ENCODE measurements at regions of chr18 and their contacts with region 1.

Region 1: GRCh38 chr18:12883684-12884405 is at the start of gene PTPN2:
- DNase-seq: peak; percentile 93
- ATAC-seq: peak; percentile 88
- H3K4me3 Mint-ChIP-seq: peak within 1 kb of the TSS; percentile 78
- H3K27ac Mint-ChIP-seq: peak within 1 kb of the TSS; percentile 94
- H3K4me1 Mint-ChIP-seq: peaks cover 56% of the 10 kb centered on the region
- H3K27me3 Mint-ChIP-seq: no peaks in the 10 kb centered on the region
- total RNA-seq, gene PTPN2: 60.6 to 72.9 TPM

Region 2: DNA sequence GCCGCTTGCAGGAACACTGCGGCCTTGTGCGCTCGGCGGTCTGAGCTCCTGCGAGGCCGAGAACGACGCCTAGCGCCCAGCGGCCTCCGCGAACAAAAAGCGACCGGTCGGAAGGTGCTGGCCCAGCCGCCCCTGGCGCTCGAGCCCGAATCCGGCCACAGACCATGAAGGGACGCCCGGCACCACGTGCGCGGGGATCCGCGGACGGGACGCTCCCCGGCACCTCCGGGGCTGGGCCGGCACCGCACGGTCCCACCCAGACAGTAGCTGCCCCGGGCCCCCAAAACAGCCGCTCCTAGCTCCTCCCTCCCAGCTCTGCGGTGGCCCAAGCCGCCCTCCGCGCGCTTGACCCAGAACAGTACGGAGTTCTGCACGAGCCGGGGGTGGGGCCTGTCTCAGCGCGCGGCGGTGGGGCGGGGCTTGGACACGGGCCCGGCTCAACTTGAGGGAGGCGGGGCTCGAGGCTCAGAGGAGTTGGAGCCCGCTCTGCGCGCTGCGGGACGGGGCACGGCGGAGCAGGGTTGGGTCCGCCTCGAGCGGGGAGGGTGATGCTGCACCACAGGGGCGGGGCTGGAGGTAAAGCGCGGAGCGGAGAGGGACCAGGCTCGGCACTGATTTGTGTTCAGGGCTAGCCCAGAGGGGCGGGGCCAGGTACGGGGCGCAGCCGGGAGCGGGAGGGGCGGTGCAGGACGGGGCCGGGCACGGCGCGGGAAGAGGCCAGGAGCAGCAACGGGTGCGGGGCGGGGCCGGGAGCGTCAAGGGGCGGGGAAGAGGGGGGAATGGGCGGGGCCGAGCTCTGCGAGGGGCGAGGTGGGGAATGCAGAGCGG is 903.1 kb before region 1 on chr18:
- CTCF ChIA-PET with region 1: no interaction called
- POLR2A ChIA-PET with region 1: no interaction called
- intact Hi-C with region 1: loop called in 1 of 2 experiments (anchors 1 kb)
- DNase-seq: peak; percentile 99
- ATAC-seq: peak; percentile 95
- H3K4me3 Mint-ChIP-seq: peak overlapping the region; percentile 91
- H3K27ac Mint-ChIP-seq: peak overlapping the region; percentile 82
- H3K4me1 Mint-ChIP-seq: peaks cover 16% of the 10 kb centered on the region
- H3K27me3 Mint-ChIP-seq: peaks cover 4% of the 10 kb centered on the region

Region 3: GRCh38 chr18:12776821-12777471 is 106.9 kb before region 1 on chr18:
- CTCF ChIA-PET with region 1: no interaction called
- POLR2A ChIA-PET with region 1: interaction called, 8 read pairs
- intact Hi-C with region 1: loop called in 1 of 2 experiments (anchors 1 kb)
- DNase-seq: no peak
- ATAC-seq: no peak
- H3K4me3 Mint-ChIP-seq: no peak overlapping the region
- H3K27ac Mint-ChIP-seq: no peak overlapping the region
- H3K4me1 Mint-ChIP-seq: peaks cover 16% of the 10 kb centered on the region
- H3K27me3 Mint-ChIP-seq: no peaks in the 10 kb centered on the region

Region 4: GRCh38 chr18:12857215-12857905 is 26.5 kb before region 1 on chr18:
- CTCF ChIA-PET with region 1: interaction called, 7 read pairs
- POLR2A ChIA-PET with region 1: interaction called, 4 read pairs
- intact Hi-C with region 1: loop called (anchors 1 to 2 kb)
- DNase-seq: peak; percentile 66
- ATAC-seq: peak; percentile 82
- H3K4me3 Mint-ChIP-seq: peak overlapping the region; percentile 15
- H3K27ac Mint-ChIP-seq: peak overlapping the region; percentile 71
- H3K4me1 Mint-ChIP-seq: peaks cover 68% of the 10 kb centered on the region
- H3K27me3 Mint-ChIP-seq: no peaks in the 10 kb centered on the region

Region 5: DNA sequence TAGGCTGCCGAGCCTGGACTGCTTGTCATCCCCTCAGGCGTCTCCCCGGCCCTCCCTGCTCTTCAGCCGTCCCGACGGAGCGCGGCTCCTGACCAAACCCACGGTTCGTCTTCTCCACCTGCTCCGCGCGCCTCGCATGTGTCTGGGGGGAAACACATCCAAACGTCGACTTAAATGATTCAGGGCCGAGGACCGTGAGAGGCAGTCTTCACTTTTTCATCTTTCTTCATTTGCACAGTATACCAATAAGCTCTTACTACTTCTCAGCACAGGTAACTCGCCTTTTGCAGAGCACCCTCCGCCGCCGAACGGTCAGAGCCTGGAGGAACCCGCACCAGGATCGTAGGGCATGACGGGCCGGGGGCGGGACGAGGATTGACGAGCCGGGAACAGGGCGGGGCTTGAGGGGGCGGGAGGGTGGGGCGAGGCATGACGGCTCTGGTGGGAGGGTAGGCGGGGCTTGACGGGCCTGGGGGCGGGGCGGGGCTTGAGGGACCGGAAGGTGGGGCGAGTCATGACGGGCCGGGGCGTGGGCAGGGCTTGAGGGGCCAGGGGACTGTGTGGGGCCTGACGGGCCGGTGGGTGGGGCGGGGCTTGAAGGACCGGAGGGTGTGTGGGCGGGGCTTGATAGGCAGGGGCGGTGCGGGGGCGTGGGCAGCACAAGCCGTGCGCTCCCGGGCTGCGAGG is 63.7 kb after region 1 on chr18 and contains the start of gene SEH1L:
- CTCF ChIA-PET with region 1: interaction called, 3 read pairs
- POLR2A ChIA-PET with region 1: interaction called, 10 read pairs
- intact Hi-C with region 1: loop called (anchors 1 kb)
- DNase-seq: peak; percentile 100
- ATAC-seq: peak; percentile 86
- H3K4me3 Mint-ChIP-seq: peak within 1 kb of the TSS; percentile 89
- H3K27ac Mint-ChIP-seq: peak within 1 kb of the TSS; percentile 97
- H3K4me1 Mint-ChIP-seq: peaks cover 34% of the 10 kb centered on the region
- H3K27me3 Mint-ChIP-seq: no peaks in the 10 kb centered on the region
- total RNA-seq, gene SEH1L: 100 to 107 TPM

Region 6: GRCh38 chr18:13137670-13138419 is 254.0 kb after region 1 on chr18:
- CTCF ChIA-PET with region 1: no interaction called
- POLR2A ChIA-PET with region 1: no interaction called
- intact Hi-C with region 1: loop called in 1 of 2 experiments (anchors 5 kb)
- DNase-seq: peak; percentile 76
- ATAC-seq: peak; percentile 78
- H3K4me3 Mint-ChIP-seq: peak overlapping the region; percentile 83
- H3K27ac Mint-ChIP-seq: peak overlapping the region; percentile 86
- H3K4me1 Mint-ChIP-seq: peaks cover 24% of the 10 kb centered on the region
- H3K27me3 Mint-ChIP-seq: peaks cover 2% of the 10 kb centered on the region

Region 7: DNA sequence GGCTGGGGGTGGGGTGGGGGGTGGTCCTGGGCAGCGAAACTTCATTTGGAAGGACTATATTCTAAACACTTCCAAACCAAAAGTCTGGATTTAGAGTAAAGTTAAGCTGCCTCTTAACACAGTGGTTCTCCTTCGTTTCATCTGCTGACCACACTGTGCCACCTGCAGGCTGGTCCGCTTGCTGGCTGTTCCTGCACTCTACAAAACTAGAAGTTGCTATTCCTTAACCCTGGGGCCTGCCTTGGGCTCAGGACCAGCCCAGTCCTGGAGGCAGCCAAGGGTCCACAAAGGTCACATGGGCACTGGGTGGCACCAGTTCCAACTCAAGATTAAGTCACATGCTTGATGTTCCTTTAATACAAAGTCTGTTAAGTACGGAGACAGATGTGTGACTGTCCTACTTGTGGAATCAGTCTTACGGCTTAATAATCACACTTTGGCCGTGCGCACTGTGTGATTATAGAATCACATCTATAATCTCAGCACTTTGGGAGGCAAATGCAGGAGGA is 647.1 kb after region 1 on chr18:
- CTCF ChIA-PET with region 1: no interaction called
- POLR2A ChIA-PET with region 1: no interaction called
- intact Hi-C with region 1: no loop called
- DNase-seq: peak; percentile 46
- ATAC-seq: peak; percentile 12
- H3K4me3 Mint-ChIP-seq: no peak overlapping the region
- H3K27ac Mint-ChIP-seq: no peak overlapping the region
- H3K4me1 Mint-ChIP-seq: peaks cover 41% of the 10 kb centered on the region
- H3K27me3 Mint-ChIP-seq: no peaks in the 10 kb centered on the region

Measured in activated CD4-positive, alpha-beta T cell treated with anti-CD3 and anti-CD28 coated beads for 36 hours (primary cell).